Calu3 (cell line): ENCODE measurements at regions of chr6 and their contacts with region 1.

Region 1: GRCh38 chr6:131063028-131063763 is at the start of gene EPB41L2:
- DNase-seq: peak; percentile 97
- H3K4me3 Mint-ChIP-seq: peak within 1 kb of the TSS; percentile 85
- H3K27ac Mint-ChIP-seq: peak within 1 kb of the TSS; percentile 92
- H3K4me1 Mint-ChIP-seq: peaks cover 59% of the 10 kb centered on the region
- H3K27me3 Mint-ChIP-seq: no peaks in the 10 kb centered on the region
- CTCF ChIP-seq: peak; percentile 36
- total RNA-seq, gene EPB41L2: 284 and 332 TPM in 2 replicates

Region 2: DNA sequence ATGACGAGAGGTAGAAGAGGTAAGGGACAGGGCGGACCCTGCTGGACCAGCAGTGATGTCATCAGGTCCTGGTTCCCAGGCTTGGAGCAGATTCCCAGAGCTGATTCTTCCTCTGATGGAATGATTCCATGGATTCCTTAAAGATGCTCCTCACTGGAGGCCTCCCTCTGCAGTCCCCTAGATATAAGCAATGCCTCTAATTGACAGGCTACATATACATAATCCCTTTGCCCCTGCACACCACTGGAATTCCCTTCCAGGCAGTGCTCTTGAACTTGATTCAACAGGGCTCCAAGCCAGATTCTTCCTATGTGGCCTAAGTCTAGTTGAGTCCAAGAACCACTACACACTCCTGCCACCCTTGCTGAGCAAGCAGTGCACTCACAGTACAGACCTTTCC is 1097.1 kb before region 1 on chr6:
- CTCF ChIA-PET with region 1: no interaction called
- intact Hi-C with region 1: no loop called
- DNase-seq: no peak
- H3K4me3 Mint-ChIP-seq: no peak overlapping the region
- H3K27ac Mint-ChIP-seq: no peak overlapping the region
- H3K4me1 Mint-ChIP-seq: no peaks in the 10 kb centered on the region
- H3K27me3 Mint-ChIP-seq: peaks cover 15% of the 10 kb centered on the region
- CTCF ChIP-seq: no peak

Region 3: DNA sequence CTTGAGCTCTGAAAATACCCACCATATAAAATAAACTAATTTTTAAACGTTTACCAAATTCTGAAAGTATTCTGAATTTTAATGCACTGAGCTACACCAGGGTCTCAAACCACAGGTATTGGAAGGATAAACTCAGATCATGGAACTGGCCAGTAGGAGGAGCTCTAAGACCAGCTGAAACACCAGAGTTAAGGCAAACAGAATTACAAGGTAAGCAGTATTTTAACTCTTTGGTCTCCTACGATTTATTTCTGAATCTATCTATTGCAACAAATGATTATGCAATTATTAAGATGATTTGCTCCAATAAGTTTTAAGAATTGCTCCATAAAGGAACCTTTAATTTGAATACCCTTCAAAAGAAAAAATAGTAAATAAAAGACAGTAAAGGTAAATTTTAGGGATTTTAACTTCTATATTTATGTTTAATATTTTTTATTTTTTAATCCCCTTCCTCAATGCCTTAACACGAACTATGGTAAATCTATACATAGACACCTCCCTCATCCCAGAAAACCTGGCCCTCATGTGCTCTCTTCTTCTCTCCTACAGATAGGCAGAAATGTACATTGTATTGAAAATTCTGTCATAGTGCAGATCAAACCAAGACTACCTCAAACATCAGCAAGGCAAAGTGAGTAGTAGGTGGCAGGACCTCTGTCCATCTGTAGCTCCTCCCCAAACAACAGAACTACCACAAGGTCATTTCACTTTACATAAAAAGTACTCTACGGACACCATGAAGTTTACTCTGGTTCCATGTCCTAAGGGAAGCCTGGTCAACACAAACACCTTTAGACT is 177.6 kb before region 1 on chr6:
- CTCF ChIA-PET with region 1: no interaction called
- intact Hi-C with region 1: loop called (anchors 5 kb)
- DNase-seq: peak; percentile 83
- H3K4me3 Mint-ChIP-seq: no peak overlapping the region
- H3K27ac Mint-ChIP-seq: no peak overlapping the region
- H3K4me1 Mint-ChIP-seq: peaks cover 9% of the 10 kb centered on the region
- H3K27me3 Mint-ChIP-seq: no peaks in the 10 kb centered on the region
- CTCF ChIP-seq: peak; percentile 79

Region 4: DNA sequence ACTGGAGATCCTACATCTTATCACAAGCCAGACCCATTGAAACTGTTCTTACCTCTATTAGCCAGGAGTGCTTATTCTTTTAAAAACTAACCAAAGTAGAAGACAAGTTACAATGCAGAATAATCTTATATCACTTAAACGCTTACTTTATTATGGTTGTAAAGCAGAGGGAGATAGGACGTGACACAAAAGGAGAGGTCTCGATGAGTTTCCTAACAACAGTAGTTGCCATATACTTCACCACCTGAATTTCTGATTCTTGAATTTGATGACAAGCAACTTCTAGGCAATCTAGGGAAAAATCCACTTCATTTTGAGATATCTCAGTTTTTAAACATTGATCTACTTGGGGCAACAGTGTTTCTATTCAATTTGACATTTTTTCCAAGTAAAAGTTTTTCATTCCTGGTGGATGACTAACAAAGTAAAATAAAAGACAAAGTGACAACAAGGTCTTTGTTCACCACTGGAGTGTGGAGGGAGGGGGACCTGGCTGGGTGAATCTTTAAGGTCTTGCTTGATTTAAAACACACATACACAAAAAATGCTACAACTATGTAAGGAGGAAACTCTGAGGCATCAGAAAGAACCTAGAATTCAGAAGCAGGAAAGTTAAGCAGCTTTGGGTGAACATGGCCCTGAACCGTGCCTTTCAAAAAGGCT is 125.1 kb before region 1 on chr6:
- CTCF ChIA-PET with region 1: no interaction called
- intact Hi-C with region 1: loop called (anchors 5 kb)
- DNase-seq: peak; percentile 66
- H3K4me3 Mint-ChIP-seq: peak overlapping the region; percentile 14
- H3K27ac Mint-ChIP-seq: peak overlapping the region; percentile 83
- H3K4me1 Mint-ChIP-seq: peaks cover 57% of the 10 kb centered on the region
- H3K27me3 Mint-ChIP-seq: no peaks in the 10 kb centered on the region
- CTCF ChIP-seq: no peak

Region 5: GRCh38 chr6:130949553-130949952 is 113.6 kb before region 1 on chr6:
- CTCF ChIA-PET with region 1: no interaction called
- intact Hi-C with region 1: no loop called
- DNase-seq: no peak
- H3K4me3 Mint-ChIP-seq: no peak overlapping the region
- H3K27ac Mint-ChIP-seq: no peak overlapping the region
- H3K4me1 Mint-ChIP-seq: peaks cover 10% of the 10 kb centered on the region
- H3K27me3 Mint-ChIP-seq: no peaks in the 10 kb centered on the region
- CTCF ChIP-seq: no peak

Region 6: DNA sequence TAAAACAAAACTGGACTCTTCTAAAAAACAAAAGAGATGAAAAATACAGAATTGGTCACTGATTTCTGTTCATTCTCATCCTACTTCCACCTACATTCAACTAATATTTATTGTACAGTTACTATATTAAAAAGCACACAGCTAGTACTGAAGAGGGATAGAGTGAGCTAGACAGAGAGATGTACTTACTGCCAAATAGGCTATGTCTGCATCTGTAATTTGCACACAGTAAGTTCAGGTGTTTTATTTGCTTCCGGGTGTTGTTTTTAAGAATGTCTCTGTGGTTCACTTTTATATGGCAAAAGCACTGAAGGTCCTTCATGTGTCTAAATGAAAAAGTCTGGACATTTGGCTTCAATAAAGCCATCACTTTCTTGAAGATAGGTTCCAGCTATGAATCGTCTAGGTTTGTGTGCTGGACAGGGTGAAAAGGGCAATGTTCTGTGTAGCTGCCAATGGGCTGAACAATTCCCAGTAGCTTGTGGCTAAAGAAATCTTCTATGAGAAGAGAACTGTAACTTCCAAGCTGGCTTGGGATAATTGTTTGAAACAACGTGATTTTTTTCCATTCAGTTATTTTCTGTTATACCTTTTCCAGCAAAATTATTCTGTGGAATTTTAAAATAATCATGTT is 47.4 kb before region 1 on chr6:
- CTCF ChIA-PET with region 1: no interaction called
- intact Hi-C with region 1: loop called (anchors 5 kb)
- DNase-seq: no peak
- H3K4me3 Mint-ChIP-seq: peak overlapping the region; percentile 20
- H3K27ac Mint-ChIP-seq: peak overlapping the region; percentile 40
- H3K4me1 Mint-ChIP-seq: peaks cover 57% of the 10 kb centered on the region
- H3K27me3 Mint-ChIP-seq: no peaks in the 10 kb centered on the region
- CTCF ChIP-seq: no peak

Region 7: GRCh38 chr6:131107151-131107550 is 44.0 kb after region 1 on chr6:
- CTCF ChIA-PET with region 1: interaction called, 5 read pairs
- intact Hi-C with region 1: loop called (anchors 2 kb)
- DNase-seq: peak; percentile 16
- H3K4me3 Mint-ChIP-seq: no peak overlapping the region
- H3K27ac Mint-ChIP-seq: peak overlapping the region; percentile 72
- H3K4me1 Mint-ChIP-seq: peaks cover 65% of the 10 kb centered on the region
- H3K27me3 Mint-ChIP-seq: no peaks in the 10 kb centered on the region
- CTCF ChIP-seq: no peak

Region 8: DNA sequence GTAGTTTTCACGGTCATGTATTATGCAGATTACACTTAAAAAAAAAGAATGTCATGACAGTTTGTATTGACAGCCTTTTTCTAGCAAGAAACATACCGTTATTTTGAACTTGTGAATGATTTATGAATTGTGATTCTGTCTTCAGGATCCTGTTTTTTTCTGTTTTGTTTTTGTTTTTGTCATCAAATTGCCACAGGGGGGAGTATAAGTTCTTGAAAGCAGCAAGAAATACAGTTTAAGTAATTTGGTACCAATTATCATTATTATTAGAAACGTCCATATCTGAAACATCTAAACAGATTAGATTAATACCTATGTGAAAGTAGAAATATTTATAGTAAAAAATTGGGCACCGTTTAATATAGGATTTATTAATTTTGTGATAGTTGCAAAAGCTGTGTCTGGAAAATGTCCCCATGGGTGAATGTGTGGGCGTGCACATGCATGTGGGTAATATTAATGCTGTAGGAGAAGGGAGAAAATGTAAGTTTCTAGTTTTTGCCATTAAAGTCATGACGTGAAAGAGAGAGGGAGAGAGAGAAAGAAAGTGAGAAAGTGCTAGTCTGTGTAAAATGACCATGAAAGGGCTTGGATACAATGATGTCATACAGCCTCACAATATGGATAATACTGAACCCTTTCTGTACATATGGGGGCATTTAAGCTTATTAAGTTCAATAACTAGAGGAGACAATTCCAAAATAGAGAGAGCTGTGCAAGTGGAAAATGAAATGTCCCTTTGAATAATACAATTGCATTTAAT is 897.4 kb after region 1 on chr6:
- CTCF ChIA-PET with region 1: no interaction called
- intact Hi-C with region 1: no loop called
- DNase-seq: no peak
- H3K4me3 Mint-ChIP-seq: no peak overlapping the region
- H3K27ac Mint-ChIP-seq: no peak overlapping the region
- H3K4me1 Mint-ChIP-seq: peaks cover 20% of the 10 kb centered on the region
- H3K27me3 Mint-ChIP-seq: no peaks in the 10 kb centered on the region
- CTCF ChIP-seq: no peak